ENCODE measurements at regions of chr17 and their contacts with region 1.

Region 1: GRCh38 chr17:27413315-27413714 is 42.9 kb upstream of the KSR1 start:
- DNase-seq: no peak
- ATAC-seq: no peak
- H3K4me3 ChIP-seq: no peak overlapping the region
- H3K27ac ChIP-seq: no peak overlapping the region
- H3K4me1 ChIP-seq: peaks cover 9% of the 10 kb centered on the region
- H3K27me3 ChIP-seq: peaks cover 5% of the 10 kb centered on the region
- CTCF ChIP-seq: no peak
- POLR2A ChIP-seq: no peak
- RAD21 ChIP-seq: no peak

Region 2: GRCh38 chr17:27345141-27345904 is 68.0 kb before region 1 on chr17:
- CTCF ChIA-PET with region 1: no interaction called
- POLR2A ChIA-PET with region 1: no interaction called
- dilution Hi-C with region 1: no loop called
- in situ Hi-C with region 1: no loop called
- intact Hi-C with region 1: no loop called
- DNase-seq: peak; percentile 28
- ATAC-seq: no peak
- H3K4me3 ChIP-seq: no peak overlapping the region
- H3K27ac ChIP-seq: no peak overlapping the region
- H3K4me1 ChIP-seq: 0 out of 2 replicates have a peak, but pooled peaks cover 2% of the 10 kb centered on the region
- H3K27me3 ChIP-seq: no peaks in the 10 kb centered on the region
- CTCF ChIP-seq: no peak
- POLR2A ChIP-seq: no peak
- RAD21 ChIP-seq: no peak

Region 3: DNA sequence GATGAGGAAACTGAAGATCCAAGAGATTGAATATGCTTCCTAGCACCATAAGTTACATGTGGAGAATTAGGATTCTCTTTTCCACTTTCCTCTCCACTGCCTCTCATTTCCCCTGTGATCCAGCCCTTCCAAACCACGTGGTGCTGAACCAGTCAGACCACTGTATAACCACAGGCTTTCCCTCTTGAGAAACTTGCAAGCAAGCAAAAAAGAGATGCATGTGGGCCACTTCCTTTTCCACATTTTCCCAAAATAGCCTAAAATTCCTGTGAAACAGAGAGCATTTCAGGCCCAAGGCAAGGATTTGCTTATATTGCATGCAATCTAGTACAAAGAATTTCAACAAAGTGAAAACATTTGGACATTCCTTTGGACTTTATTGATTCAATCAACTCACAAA is 16.4 kb before region 1 on chr17:
- CTCF ChIA-PET with region 1: no interaction called
- POLR2A ChIA-PET with region 1: interaction called, 23 read pairs
- dilution Hi-C with region 1: no loop called
- in situ Hi-C with region 1: no loop called
- intact Hi-C with region 1: no loop called
- DNase-seq: peak; percentile 42
- ATAC-seq: peak; percentile 93
- H3K4me3 ChIP-seq: no peak overlapping the region
- H3K27ac ChIP-seq: no peak overlapping the region
- H3K4me1 ChIP-seq: peaks cover 3% of the 10 kb centered on the region; the same call in 1 of the 2 replicates
- H3K27me3 ChIP-seq: peaks cover 2% of the 10 kb centered on the region; the same call in 1 of the 2 replicates
- CTCF ChIP-seq: no peak
- POLR2A ChIP-seq: no peak
- RAD21 ChIP-seq: no peak